Activated CD8-positive, alpha-beta T cell treated with anti-CD3 and anti-CD28 coated beads, Interleukin-2, amount 10 ng/mL, durations not matched to agents 7 days and 5 days (primary cell): ENCODE measurements at regions of chr3 and their contacts with region 1.

Region 1: GRCh38 chr3:196198771-196199753 is 12.1 kb downstream of the ZDHHC19 start:
- DNase-seq: no peak
- ATAC-seq: no peak
- H3K4me3 Mint-ChIP-seq: no peak overlapping the region
- H3K27ac Mint-ChIP-seq: no peak overlapping the region
- H3K4me1 Mint-ChIP-seq: peaks cover 24% of the 10 kb centered on the region
- H3K27me3 Mint-ChIP-seq: peaks cover 7% of the 10 kb centered on the region

Region 2: GRCh38 chr3:196039358-196039757 is 159.7 kb before region 1 on chr3:
- CTCF ChIA-PET with region 1: no interaction called
- POLR2A ChIA-PET with region 1: no interaction called
- DNase-seq: no peak
- ATAC-seq: no peak
- H3K4me3 Mint-ChIP-seq: no peak overlapping the region
- H3K27ac Mint-ChIP-seq: no peak overlapping the region
- H3K4me1 Mint-ChIP-seq: no peaks in the 10 kb centered on the region
- H3K27me3 Mint-ChIP-seq: peaks cover 2% of the 10 kb centered on the region

Region 3: GRCh38 chr3:196096382-196096953 is 102.6 kb before region 1 on chr3:
- CTCF ChIA-PET with region 1: interaction called, 10 read pairs
- POLR2A ChIA-PET with region 1: no interaction called
- DNase-seq: no peak
- ATAC-seq: no peak
- H3K4me3 Mint-ChIP-seq: no peak overlapping the region
- H3K27ac Mint-ChIP-seq: no peak overlapping the region
- H3K4me1 Mint-ChIP-seq: peaks cover 2% of the 10 kb centered on the region
- H3K27me3 Mint-ChIP-seq: peaks cover 3% of the 10 kb centered on the region

Region 4: GRCh38 chr3:196186651-196187573 is 12.2 kb before region 1 on chr3:
- CTCF ChIA-PET with region 1: interaction called, 66 read pairs
- POLR2A ChIA-PET with region 1: interaction called, 3 read pairs
- DNase-seq: no peak
- ATAC-seq: no peak
- H3K4me3 Mint-ChIP-seq: peak overlapping the region; percentile 26
- H3K27ac Mint-ChIP-seq: peak overlapping the region; percentile 81
- H3K4me1 Mint-ChIP-seq: peaks cover 43% of the 10 kb centered on the region
- H3K27me3 Mint-ChIP-seq: no peaks in the 10 kb centered on the region

Region 5: DNA sequence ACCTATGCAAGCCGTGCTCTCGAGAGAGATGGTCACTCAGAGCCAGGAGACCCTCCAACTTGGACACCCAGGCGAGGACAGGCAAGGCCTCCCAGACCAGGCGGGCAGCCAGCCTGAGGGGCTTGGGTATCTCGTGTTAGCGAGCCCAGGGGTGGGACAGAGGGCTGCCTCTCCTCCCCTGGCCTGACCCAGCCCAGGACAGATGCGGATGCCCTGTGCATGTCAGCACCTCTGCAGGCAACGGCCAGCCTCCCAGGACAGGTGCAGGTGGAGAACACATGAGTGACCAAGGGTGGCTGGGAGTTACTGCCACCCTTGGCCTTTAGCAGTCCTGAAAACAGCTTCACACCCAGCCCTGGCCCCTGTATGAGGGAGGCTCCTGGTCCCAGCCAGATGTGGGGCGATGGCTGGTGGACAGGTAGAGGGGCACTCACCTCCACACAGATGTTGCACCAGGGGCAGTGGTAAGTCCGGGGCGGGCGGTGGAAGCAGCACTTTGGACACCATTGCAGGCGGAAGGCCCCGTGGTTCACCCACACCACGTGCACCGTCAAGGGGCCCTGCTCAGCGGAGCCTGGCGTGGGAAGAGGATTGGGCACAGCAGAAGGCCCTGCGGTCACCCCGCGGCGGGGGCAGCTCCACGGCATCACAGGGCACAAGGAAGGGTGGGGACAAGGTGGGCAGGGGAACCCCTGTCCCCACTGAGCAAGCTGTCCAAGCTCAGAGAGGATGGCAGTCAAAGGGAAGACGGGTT is 10.1 kb after region 1 on chr3:
- CTCF ChIA-PET with region 1: no interaction called
- POLR2A ChIA-PET with region 1: no interaction called
- DNase-seq: no peak
- ATAC-seq: no peak
- H3K4me3 Mint-ChIP-seq: peak overlapping the region; percentile 80
- H3K27ac Mint-ChIP-seq: no peak overlapping the region
- H3K4me1 Mint-ChIP-seq: peaks cover 12% of the 10 kb centered on the region
- H3K27me3 Mint-ChIP-seq: peaks cover 18% of the 10 kb centered on the region

Region 6: DNA sequence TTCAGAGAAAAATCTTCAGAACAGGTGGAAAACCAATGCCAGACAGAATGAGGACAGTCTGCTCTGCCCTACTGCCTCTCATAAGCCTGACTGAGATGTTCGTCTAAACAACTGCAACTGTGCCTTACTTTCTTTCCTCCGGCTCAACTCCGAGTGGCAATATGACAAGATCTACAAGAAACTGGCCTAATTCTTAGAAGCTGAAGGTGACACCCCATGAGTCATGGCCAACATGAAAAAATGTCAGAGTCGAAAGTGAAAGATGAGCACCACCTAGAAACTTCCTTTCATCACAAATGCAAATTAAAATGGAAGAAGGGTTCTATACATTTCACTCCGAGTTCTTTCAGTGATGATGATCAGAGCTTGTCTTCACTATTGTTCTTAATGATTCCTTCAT is 75.5 kb after region 1 on chr3:
- CTCF ChIA-PET with region 1: no interaction called
- POLR2A ChIA-PET with region 1: no interaction called
- DNase-seq: peak; percentile 84
- ATAC-seq: peak; percentile 93
- H3K4me3 Mint-ChIP-seq: peak overlapping the region; percentile 67
- H3K27ac Mint-ChIP-seq: peak overlapping the region; percentile 91
- H3K4me1 Mint-ChIP-seq: peaks cover 68% of the 10 kb centered on the region
- H3K27me3 Mint-ChIP-seq: no peaks in the 10 kb centered on the region